ENCODE measurements at regions of chr2 and their contacts with region 1.

Region 1: DNA sequence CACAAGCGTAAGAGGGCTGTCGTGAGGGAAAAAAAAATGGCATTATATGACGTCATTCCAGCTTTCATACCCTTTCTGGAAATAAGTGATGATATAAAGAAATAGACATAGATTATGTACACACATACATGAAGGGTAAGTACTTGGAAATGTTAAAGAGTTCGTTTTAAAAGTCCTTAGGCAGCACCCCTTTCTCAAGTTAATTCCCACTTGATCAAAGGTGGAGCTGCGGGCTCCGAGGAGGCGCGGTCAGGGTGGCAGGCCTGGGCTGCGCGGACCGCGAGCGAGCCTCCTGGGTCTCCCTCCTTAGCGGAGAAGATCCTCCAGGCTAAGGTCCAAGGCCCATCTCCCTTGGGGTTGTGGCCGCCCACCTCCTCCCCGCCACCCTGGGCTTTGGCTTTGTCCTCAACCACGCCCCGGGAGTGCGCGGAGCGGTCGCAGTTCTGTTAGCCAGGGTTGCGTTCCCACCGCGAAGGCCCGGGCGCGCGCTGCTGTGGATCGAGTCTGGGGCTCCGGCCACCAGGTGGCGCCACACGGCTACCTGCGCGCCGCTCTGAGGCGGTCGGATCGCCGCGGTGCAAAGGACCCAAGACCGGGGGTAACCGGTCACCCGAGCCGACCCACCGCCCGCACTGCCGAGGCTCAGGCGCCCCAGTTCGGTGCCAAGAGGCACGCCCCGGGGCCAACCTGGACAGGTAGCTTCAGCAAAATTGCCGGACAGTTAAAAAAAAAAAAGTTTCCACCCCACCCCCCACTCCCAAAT is 66.8 kb downstream of the HNRNPLL start:
- DNase-seq: peak; percentile 85
- CTCF ChIP-seq: peak; percentile 88

Region 2: DNA sequence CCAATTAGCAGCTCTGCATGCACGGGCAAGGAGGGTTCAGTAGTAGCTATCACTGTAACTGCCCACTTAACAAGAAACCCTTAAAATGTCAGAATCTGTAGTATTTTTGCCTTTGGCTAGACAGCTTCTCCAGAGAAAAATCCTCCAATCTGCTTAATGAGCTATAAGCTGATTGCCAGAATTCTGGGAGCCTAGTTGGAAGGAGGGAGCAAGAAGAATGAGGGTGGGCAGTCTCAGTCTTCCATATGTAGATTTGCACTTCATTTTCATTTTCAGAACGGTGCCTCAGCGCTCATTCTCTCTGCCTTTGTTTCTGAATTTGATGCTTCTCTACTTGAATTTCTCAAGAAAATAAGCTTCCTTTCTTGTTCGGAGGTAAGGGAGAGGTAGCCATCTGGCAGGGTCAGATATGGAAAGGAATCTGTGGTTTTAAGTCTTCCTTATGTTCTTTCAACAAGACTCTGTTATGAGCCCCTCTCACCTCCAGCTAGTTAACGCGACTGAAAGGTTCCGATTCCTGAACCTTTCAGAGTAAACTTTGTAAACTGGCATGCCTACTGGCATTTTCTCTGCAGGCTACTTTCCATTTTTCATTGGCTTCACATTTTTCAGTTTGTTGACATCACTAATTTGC is 13.3 kb after region 1 on chr2:
- CTCF ChIA-PET with region 1: interaction called, 14 read pairs
- POLR2A ChIA-PET with region 1: no interaction called
- DNase-seq: no peak
- CTCF ChIP-seq: no peak

Region 3: DNA sequence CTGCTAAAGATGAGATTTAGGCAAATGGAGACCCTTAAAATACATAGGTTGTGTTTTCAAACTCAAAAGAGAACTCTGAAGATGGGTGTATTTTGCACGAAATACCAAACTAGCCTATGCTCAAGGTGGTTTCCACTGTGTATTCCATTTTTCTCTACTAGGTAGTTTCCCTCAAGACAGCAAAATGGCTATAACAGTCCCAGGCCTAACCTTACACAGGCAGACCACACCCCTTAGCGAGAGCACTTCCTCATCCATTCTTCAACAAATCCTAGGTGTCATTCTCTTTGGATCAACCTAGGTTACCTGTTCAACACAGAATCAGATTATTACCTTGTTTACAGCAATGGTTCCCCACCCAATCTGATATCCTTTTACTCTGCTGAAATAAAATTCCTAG is 24.2 kb after region 1 on chr2:
- CTCF ChIA-PET with region 1: interaction called, 25 read pairs
- POLR2A ChIA-PET with region 1: no interaction called
- DNase-seq: no peak
- CTCF ChIP-seq: no peak

Region 4: DNA sequence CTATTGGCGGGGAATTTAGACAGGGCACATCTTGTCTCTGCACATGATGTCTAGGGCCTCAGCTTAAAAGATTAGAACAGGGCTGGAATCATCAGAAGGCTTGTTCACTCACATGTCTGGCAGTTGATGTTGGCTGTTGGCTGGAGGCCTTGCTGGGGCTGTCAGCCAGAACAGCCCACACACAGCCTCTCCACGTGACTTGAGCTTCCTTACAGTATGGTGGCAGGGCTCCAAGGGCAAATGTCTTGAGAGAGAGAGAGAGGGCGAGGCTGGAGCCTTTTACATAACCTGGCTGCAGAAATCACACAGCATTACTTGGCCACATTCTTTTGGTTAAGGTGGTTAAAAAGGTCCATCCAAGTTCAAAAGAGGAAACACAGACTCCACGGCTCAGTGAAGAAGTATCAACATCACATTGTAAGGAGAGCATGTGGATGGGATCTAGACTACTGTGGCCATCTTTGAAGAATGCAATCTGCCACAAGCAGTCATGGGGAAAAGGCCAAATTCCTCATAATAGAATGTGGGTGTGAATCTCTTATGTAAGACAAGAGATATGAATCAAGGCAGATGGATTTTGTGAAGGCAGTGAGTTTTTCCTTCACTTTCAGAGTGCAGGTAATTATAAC is 184.8 kb after region 1 on chr2:
- CTCF ChIA-PET with region 1: interaction called, 15 read pairs
- POLR2A ChIA-PET with region 1: no interaction called
- DNase-seq: no peak
- CTCF ChIP-seq: no peak

Region 5: DNA sequence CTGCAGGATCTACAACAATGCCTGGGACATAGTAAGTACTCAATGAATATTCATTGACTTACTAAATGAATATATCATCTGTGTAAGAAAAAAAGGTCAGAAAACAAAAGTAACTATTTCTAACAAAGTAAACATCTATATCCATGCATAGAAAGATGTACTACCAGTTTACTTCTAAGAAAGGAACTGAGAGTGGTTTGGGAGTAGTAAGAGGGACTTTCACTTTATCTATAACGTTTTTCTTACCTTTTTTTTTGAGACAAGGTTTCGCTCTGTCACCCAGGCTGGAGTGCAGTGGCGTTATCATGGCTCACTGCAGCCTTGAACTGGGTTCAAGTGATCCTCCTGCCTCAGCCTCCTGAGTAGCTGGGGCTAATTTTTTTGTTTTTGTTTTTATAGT is 314.1 kb after region 1 on chr2:
- CTCF ChIA-PET with region 1: no interaction called
- POLR2A ChIA-PET with region 1: no interaction called
- DNase-seq: peak; percentile 66
- CTCF ChIP-seq: no peak